Endothelial cell of umbilical vein (primary cell): ENCODE measurements at regions of chr14 and their contacts with region 1.

Region 1: GRCh38 chr14:85576848-85577542 is 47.1 kb downstream of the FLRT2 start:
- DNase-seq: no peak
- H3K4me3 ChIP-seq: no peak overlapping the region
- H3K27ac ChIP-seq: no peak overlapping the region
- H3K4me1 ChIP-seq: peaks cover 45% of the 10 kb centered on the region
- H3K27me3 ChIP-seq: no peaks in the 10 kb centered on the region
- CTCF ChIP-seq: no peak
- POLR2A ChIP-seq: no peak

Region 2: DNA sequence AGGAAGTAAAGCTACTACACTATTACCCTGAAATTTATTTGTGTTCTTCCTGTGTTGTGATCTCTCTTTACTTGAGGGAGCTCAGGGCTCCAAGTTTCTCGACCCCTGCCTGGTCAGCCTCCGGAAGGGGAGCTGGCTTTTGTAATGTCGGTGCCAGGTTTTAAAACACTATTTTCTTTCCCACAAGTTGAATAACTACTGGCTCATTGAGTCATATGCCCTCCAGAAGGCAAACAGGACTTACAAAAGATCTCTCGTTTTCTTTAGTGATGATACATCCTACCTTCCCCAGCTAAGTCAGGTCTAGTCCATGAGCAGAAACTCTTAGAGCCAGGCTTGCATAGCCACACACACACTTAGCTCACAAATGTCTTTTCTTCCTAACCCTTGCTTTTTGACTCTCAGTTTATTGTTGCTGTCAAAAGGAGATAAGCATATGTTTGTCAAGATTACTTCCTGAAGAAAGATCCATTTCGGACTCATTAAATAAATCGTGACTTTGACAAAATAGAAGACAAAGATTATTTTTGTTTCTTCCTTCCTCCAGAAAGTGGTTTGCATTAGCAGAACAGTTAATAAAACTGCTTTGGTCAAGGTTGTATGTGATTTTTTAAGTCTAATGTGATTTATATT is 256.9 kb before region 1 on chr14:
- CTCF ChIA-PET with region 1: no interaction called
- POLR2A ChIA-PET with region 1: no interaction called
- dilution Hi-C with region 1: no loop called
- intact Hi-C with region 1: no loop called
- DNase-seq: peak; percentile 95
- H3K4me3 ChIP-seq: peak overlapping the region in 1 of 3 experiments; percentile 35
- H3K27ac ChIP-seq: peak overlapping the region; percentile 68
- H3K4me1 ChIP-seq: peaks cover 25% of the 10 kb centered on the region
- H3K27me3 ChIP-seq: no peaks in the 10 kb centered on the region
- CTCF ChIP-seq: no peak
- POLR2A ChIP-seq: peak; percentile 35

Region 3: GRCh38 chr14:85587151-85587711 is 10.2 kb after region 1 on chr14:
- CTCF ChIA-PET with region 1: interaction called, 14 read pairs
- POLR2A ChIA-PET with region 1: no interaction called
- dilution Hi-C with region 1: no loop called
- intact Hi-C with region 1: no loop called
- DNase-seq: no peak
- H3K4me3 ChIP-seq: no peak overlapping the region
- H3K27ac ChIP-seq: no peak overlapping the region
- H3K4me1 ChIP-seq: peaks cover 11% of the 10 kb centered on the region
- H3K27me3 ChIP-seq: no peaks in the 10 kb centered on the region
- CTCF ChIP-seq: no peak
- POLR2A ChIP-seq: no peak